Activated CD4-positive, alpha-beta memory T cell treated with anti-CD3 and anti-CD28 coated beads for 36 hours (primary cell): ENCODE measurements at regions of chr15 and their contacts with region 1.

Region 1: GRCh38 chr15:89171136-89172072 is 50.0 kb downstream of the RLBP1 start:
- DNase-seq: peak; percentile 53
- H3K4me3 Mint-ChIP-seq: no peak overlapping the region
- H3K27ac Mint-ChIP-seq: no peak overlapping the region
- H3K4me1 Mint-ChIP-seq: peaks cover 24% of the 10 kb centered on the region
- H3K27me3 Mint-ChIP-seq: no peaks in the 10 kb centered on the region

Region 2: DNA sequence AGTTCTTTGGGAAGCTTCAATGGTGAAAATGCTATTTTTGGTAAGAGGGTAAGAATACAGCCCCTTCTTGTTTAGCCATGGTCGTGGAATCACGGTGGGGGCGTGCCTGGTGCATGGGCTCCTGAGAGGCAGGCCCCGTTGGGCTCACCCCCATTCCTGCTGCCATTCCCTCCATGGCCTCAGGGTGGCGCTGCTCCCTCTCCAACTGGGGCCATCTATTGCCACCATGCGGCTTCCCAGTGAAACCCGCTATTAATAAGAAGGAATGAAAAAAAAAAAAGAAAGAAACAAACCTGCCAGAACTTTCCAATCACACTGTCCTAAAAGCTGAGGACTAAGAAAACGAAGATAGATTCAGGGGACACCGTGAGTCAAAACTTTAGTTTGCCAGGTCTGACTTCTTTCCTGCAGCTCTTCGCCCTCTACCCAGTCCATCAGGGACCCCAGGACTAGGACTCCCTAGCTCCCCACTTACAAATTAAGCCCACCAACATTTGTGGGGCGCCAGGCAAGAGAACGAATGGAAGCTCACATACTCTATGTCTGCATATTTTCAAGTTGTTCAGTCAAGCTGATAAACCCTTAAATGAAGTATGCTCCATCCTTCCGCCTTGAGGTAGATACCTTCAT is 113.8 kb before region 1 on chr15:
- CTCF ChIA-PET with region 1: interaction called, 276 read pairs
- POLR2A ChIA-PET with region 1: interaction called, 3 read pairs
- intact Hi-C with region 1: no loop called
- DNase-seq: peak; percentile 90
- H3K4me3 Mint-ChIP-seq: no peak overlapping the region
- H3K27ac Mint-ChIP-seq: no peak overlapping the region
- H3K4me1 Mint-ChIP-seq: peaks cover 11% of the 10 kb centered on the region
- H3K27me3 Mint-ChIP-seq: no peaks in the 10 kb centered on the region

Region 3: DNA sequence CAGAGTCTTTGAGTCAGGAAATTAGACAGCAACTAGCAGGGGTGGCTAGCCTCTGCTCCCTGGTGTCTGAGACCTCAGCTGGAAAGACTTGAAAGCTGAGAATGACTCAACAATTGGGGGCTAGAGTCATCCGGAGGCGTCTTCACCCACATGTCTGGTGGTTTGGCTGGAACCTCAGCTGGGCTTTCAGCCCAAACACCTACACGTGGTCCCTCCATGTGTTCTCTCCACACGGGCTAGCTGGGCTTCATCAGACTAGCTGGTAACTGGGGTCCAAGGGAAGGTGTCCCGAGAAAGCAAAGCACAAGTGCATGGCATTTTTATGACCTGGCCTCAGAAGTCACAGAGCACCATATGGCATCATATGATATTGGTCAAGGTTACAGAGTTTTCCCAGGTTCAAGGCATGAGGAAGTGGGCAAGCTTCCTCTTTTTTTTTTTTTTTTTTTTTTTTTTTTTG is 103.0 kb before region 1 on chr15:
- CTCF ChIA-PET with region 1: interaction called, 276 read pairs
- POLR2A ChIA-PET with region 1: no interaction called
- intact Hi-C with region 1: loop called (anchors 5 kb)
- DNase-seq: peak; percentile 78
- H3K4me3 Mint-ChIP-seq: no peak overlapping the region
- H3K27ac Mint-ChIP-seq: peak overlapping the region; percentile 57
- H3K4me1 Mint-ChIP-seq: peaks cover 12% of the 10 kb centered on the region
- H3K27me3 Mint-ChIP-seq: peaks cover 2% of the 10 kb centered on the region

Region 4: DNA sequence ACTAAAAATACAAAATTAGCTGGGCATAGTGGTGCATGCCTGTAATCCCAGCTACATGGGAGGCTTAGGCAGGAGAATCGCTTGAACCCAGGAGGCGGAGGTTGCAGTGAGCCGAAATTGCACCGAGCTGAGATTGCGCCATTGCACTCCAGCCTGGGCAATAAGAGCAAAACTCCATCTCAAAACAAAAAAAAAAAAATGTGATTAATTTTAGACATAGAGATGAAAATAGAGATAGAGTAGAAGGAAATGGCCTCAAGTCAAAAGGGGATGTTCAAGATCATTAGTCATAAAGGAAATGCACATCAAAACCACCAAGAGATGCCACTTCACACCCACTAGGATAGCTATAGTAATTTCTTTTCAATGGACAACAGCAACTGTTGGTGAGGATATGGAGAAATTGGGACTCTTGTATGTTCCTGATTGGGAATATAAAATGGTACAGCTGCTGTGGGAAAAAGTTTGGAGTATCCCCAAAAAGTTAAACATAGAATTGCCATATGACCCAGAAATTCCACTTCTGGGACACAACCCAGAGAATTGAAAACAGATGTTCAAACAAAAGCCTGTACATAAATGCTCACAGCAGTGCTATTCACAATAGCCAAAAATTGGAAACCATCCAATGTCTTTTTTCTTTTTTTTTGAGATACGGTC is 27.8 kb before region 1 on chr15:
- CTCF ChIA-PET with region 1: interaction called, 16 read pairs
- POLR2A ChIA-PET with region 1: interaction called, 4 read pairs
- intact Hi-C with region 1: loop called (anchors 1 kb)
- DNase-seq: peak; percentile 31
- H3K4me3 Mint-ChIP-seq: no peak overlapping the region
- H3K27ac Mint-ChIP-seq: peak overlapping the region; percentile 28
- H3K4me1 Mint-ChIP-seq: peaks cover 21% of the 10 kb centered on the region
- H3K27me3 Mint-ChIP-seq: no peaks in the 10 kb centered on the region

Region 5: DNA sequence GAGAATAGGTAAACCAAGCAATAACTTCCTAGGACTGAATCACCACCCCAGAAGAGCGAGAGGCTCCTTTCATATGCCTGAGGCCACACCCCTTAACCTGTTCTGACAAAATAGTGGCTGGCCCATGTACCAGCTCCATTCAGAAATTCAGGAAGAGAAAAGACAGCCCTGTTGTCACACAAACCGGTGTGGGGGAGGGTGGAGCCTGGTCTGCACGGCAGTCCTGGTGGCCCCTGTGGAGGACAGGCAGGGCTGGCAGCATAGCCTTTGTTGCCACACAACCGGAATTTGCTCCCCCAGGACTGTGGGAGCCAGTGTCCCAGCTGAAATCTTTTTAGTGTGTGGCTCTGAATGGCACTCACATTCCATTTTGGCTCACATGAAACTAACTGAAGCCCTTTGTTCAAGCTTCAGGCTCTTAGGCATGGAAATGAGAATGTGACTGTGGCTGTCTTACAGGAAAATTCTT is 26.1 kb after region 1 on chr15:
- CTCF ChIA-PET with region 1: interaction called, 6 read pairs
- POLR2A ChIA-PET with region 1: interaction called, 8 read pairs
- intact Hi-C with region 1: loop called (anchors 1 kb)
- DNase-seq: peak; percentile 55
- H3K4me3 Mint-ChIP-seq: no peak overlapping the region
- H3K27ac Mint-ChIP-seq: peak overlapping the region; percentile 85
- H3K4me1 Mint-ChIP-seq: peaks cover 36% of the 10 kb centered on the region
- H3K27me3 Mint-ChIP-seq: no peaks in the 10 kb centered on the region

Region 6: DNA sequence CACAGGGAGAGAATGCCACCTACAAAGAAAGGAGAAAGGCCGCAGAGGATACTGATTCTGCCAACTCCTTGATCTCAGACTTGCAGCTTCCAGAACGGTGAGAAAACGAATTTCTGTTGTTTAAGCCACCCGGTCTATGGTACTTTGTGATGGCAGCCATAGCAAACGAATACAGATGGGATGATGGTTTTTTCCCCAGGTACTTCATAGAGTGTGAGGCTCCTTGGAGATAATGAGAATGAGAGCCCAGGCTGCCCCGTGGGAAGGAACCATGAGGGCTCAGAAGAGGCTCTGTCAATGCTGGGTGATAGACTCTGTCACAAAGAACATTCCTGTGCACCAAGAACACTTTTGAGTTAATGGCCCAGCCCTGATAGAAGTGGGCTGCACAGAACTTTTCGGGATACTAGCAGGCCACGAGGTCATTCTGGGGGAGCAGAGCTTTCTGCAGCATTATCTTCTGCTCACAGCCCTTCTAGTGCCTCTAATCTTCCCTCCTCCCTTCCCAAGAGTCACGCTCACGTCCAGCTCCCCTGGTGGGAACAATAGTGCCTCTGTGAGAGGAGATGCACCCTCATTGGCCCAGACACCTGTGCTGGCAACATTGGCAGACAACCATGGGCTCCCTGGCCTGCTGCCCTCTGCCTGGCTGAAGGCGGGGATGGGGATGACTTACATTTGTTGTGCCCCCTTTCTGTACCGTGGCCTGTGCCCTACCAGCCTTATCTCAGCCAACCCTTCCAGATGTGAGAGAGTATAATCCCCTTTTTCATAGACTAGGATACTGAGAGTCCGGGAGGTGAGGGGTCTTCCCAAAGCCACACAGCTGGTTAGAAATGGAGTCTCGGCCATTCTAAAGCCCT is 55.2 kb after region 1 on chr15:
- CTCF ChIA-PET with region 1: no interaction called
- POLR2A ChIA-PET with region 1: no interaction called
- intact Hi-C with region 1: no loop called
- DNase-seq: no peak
- H3K4me3 Mint-ChIP-seq: no peak overlapping the region
- H3K27ac Mint-ChIP-seq: no peak overlapping the region
- H3K4me1 Mint-ChIP-seq: peaks cover 2% of the 10 kb centered on the region
- H3K27me3 Mint-ChIP-seq: peaks cover 6% of the 10 kb centered on the region